Sciatic nerve (tissue), 2 donors: ENCODE measurements at regions of chr1 and their contacts with region 1.

Region 1: GRCh38 chr1:47938520-47938919 is 58.7 kb downstream of the TRABD2B start:
- DNase-seq: no peak
- ATAC-seq: no peak

Region 2: GRCh38 chr1:46461809-46462448 is 1476.6 kb before region 1 on chr1:
- intact Hi-C with region 1: loop called (anchors 5 kb)
- DNase-seq: no peak
- ATAC-seq: no peak